ENCODE measurements at regions of chr19 and their contacts with region 1.

Region 1: GRCh38 chr19:41541990-41542584 is 33.9 kb upstream of the CEACAM21 start:
- DNase-seq: peak; percentile 87
- ATAC-seq: peak; percentile 5
- H3K4me3 Mint-ChIP-seq: peak overlapping the region; percentile 7
- H3K27ac Mint-ChIP-seq: peak overlapping the region; percentile 90
- H3K4me1 Mint-ChIP-seq: peaks cover 59% of the 10 kb centered on the region
- H3K27me3 Mint-ChIP-seq: no peaks in the 10 kb centered on the region

Region 2: DNA sequence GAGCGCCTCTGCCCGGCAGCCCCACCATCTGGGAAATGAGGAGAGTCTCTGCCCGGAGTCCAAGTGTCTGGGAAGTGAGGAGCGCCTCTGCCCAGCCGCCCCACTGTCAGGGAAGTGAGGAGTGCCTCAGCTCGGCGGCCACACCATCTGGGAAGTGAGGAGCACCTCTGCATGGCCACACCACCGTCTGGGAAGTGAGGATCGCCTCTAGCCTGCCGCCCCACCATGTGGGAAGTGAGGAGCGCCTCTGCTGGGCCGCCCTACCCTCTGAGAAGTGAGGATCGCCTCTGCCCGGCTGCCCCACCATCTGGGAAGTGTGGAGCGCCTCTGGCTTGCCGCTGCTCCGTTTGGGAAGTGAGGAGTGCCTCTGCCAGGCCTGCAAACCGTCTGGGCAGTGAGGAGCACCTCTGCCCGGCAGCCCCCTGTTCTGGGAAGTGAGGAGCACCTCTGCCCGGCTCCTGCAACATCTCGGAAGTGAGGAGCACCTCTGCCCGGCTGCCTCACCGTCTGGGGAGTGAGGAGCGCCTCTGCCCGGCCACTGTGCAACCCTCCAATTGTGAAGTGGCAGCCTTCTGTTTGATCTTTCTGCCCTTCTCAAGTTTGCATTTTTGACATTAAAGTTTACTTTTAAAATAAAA is 27.0 kb before region 1 on chr19:
- CTCF ChIA-PET with region 1: no interaction called
- POLR2A ChIA-PET with region 1: interaction called, 4 read pairs
- intact Hi-C with region 1: loop called (anchors 1 to 2 kb)
- DNase-seq: no peak
- ATAC-seq: no peak
- H3K4me3 Mint-ChIP-seq: no peak overlapping the region
- H3K27ac Mint-ChIP-seq: no peak overlapping the region
- H3K4me1 Mint-ChIP-seq: peaks cover 5% of the 10 kb centered on the region
- H3K27me3 Mint-ChIP-seq: peaks cover 14% of the 10 kb centered on the region

Region 3: DNA sequence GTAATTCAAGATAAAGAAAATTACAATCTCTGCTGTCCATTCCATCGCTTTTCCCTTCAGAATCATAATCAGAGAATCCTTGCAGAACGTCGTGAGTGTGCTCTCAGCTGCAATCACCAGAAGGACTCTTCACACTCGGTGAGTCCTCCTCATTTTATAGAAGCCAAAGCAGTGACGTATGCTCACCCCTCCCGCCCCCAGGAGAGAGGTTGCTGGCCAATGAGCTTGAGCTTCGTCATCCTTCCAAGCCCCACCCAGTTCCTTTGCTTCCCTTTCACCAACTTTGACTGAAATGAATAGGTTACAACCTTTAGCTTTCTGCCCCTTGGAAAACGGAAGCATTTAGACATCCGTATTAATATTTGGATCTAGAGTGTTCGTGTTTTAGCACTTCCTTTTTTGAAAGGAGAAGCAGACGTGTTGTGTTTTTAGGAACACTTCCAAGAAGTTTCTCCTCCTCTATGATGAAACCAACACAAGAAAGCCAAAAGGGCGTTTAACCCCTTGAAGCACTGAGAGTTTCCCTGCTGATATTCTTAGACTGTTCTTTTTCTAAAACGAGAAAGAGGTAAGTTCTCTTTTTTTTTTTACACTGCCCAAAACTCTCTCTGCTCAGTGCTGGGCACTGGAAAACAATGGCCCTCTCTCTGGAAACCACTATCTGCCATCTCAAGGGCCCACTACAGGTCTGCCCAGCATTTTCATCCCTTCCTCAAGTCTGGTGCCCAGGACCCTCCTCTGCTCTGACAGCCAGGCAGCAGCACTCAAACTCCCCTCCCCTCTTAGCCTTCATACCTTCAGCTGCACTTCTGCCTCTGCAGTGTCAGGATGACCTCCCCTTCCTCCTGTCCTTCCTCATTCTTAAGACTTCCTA is 10.4 kb before region 1 on chr19:
- CTCF ChIA-PET with region 1: interaction called, 8 read pairs
- POLR2A ChIA-PET with region 1: interaction called, 7 read pairs
- intact Hi-C with region 1: loop called in 1 of 2 experiments (anchors 1 kb)
- DNase-seq: peak; percentile 91
- ATAC-seq: peak; percentile 85
- H3K4me3 Mint-ChIP-seq: peak overlapping the region; percentile 76
- H3K27ac Mint-ChIP-seq: peak overlapping the region; percentile 65
- H3K4me1 Mint-ChIP-seq: peaks cover 60% of the 10 kb centered on the region
- H3K27me3 Mint-ChIP-seq: no peaks in the 10 kb centered on the region

Region 4: GRCh38 chr19:41563854-41564514 is 21.9 kb after region 1 on chr19:
- CTCF ChIA-PET with region 1: interaction called, 450 read pairs
- POLR2A ChIA-PET with region 1: no interaction called
- intact Hi-C with region 1: loop called (anchors 1 kb)
- DNase-seq: peak; percentile 85
- ATAC-seq: peak; percentile 76
- H3K4me3 Mint-ChIP-seq: peak overlapping the region; percentile 76
- H3K27ac Mint-ChIP-seq: peak overlapping the region; percentile 61
- H3K4me1 Mint-ChIP-seq: peaks cover 65% of the 10 kb centered on the region
- H3K27me3 Mint-ChIP-seq: no peaks in the 10 kb centered on the region

Region 5: DNA sequence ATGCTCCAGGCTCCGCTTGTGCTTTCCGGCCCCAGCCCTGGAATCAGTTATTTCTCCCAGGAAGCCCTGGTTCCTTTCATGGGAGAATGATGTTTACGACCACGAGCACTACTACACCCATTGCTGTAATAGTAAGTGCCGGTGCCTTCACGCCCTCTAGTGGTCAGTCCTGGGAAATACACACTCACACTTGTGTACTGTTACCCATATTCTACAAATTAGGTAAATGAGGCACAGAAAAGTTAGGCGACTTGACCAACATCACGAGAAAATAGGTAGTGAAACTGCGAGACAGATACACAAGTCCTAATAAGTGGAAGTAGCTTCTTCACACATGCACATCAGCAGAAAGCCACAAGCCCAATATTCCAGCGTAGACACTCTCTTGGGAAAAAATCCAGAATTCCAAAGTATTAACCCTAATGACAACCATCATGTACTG is 55.5 kb after region 1 on chr19:
- CTCF ChIA-PET with region 1: interaction called, 7 read pairs
- POLR2A ChIA-PET with region 1: no interaction called
- intact Hi-C with region 1: loop called (anchors 1 to 5 kb)
- DNase-seq: peak; percentile 83
- ATAC-seq: peak; percentile 83
- H3K4me3 Mint-ChIP-seq: peak overlapping the region; percentile 4
- H3K27ac Mint-ChIP-seq: no peak overlapping the region
- H3K4me1 Mint-ChIP-seq: peaks cover 12% of the 10 kb centered on the region
- H3K27me3 Mint-ChIP-seq: peaks cover 5% of the 10 kb centered on the region

Measured in activated CD4-positive, alpha-beta T cell treated with anti-CD3 and anti-CD28 coated beads for 36 hours (primary cell).